Activated naive CD4-positive, alpha-beta T cell treated with anti-CD3 and anti-CD28 coated beads for 36 hours (primary cell): ENCODE measurements at regions of chr1 and their contacts with region 1.

Region 1: GRCh38 chr1:151130987-151131586 is 15.3 kb downstream of the SEMA6C start:
- DNase-seq: peak; percentile 93
- H3K4me3 Mint-ChIP-seq: peak overlapping the region; percentile 75
- H3K27ac Mint-ChIP-seq: peak overlapping the region; percentile 70
- H3K4me1 Mint-ChIP-seq: peaks cover 8% of the 10 kb centered on the region
- H3K27me3 Mint-ChIP-seq: no peaks in the 10 kb centered on the region

Region 2: GRCh38 chr1:151070474-151071276 is 60.4 kb before region 1 on chr1 and contains the start of gene GABPB2:
- CTCF ChIA-PET with region 1: interaction called, 3 read pairs
- intact Hi-C with region 1: loop called (anchors 1 kb)
- DNase-seq: peak; percentile 92
- H3K4me3 Mint-ChIP-seq: peak within 1 kb of the TSS; percentile 99
- H3K27ac Mint-ChIP-seq: peak within 1 kb of the TSS; percentile 100
- H3K4me1 Mint-ChIP-seq: peaks cover 26% of the 10 kb centered on the region
- H3K27me3 Mint-ChIP-seq: no peaks in the 10 kb centered on the region
- total RNA-seq, gene GABPB2: 16.1 to 16.2 TPM